IMR-90 (cell line): ENCODE measurements at regions of chr15 and their contacts with region 1.

Region 1: GRCh38 chr15:55661428-55661827 is 73.3 kb upstream of the PYGO1 start:
- DNase-seq: peak; percentile 33
- ATAC-seq: peak; percentile 44; the same call in 1 of the 2 replicates
- H3K4me3 ChIP-seq: no peak overlapping the region
- H3K27ac ChIP-seq: no peak overlapping the region
- H3K4me1 ChIP-seq: peaks cover 2% of the 10 kb centered on the region
- H3K27me3 ChIP-seq: no peaks in the 10 kb centered on the region
- CTCF ChIP-seq: no peak
- POLR2A ChIP-seq: no peak
- RAD21 ChIP-seq: no peak

Region 2: GRCh38 chr15:55168329-55168974 is 493.0 kb before region 1 on chr15:
- CTCF ChIA-PET with region 1: no interaction called
- POLR2A ChIA-PET with region 1: no interaction called
- dilution Hi-C with region 1: no loop called
- in situ Hi-C with region 1: no loop called
- intact Hi-C with region 1: no loop called
- DNase-seq: peak; percentile 67
- ATAC-seq: peak; percentile 97
- H3K4me3 ChIP-seq: no peak overlapping the region
- H3K27ac ChIP-seq: no peak overlapping the region
- H3K4me1 ChIP-seq: no peaks in the 10 kb centered on the region
- H3K27me3 ChIP-seq: no peaks in the 10 kb centered on the region
- CTCF ChIP-seq: peak; percentile 70
- POLR2A ChIP-seq: no peak
- RAD21 ChIP-seq: peak; percentile 49

Region 3: GRCh38 chr15:55721554-55722185 is 60.2 kb after region 1 on chr15:
- CTCF ChIA-PET with region 1: no interaction called
- POLR2A ChIA-PET with region 1: no interaction called
- dilution Hi-C with region 1: no loop called
- in situ Hi-C with region 1: no loop called
- intact Hi-C with region 1: loop called (anchors 5 kb)
- DNase-seq: no peak
- ATAC-seq: no peak
- H3K4me3 ChIP-seq: no peak overlapping the region
- H3K27ac ChIP-seq: no peak overlapping the region
- H3K4me1 ChIP-seq: no peaks in the 10 kb centered on the region
- H3K27me3 ChIP-seq: no peaks in the 10 kb centered on the region
- CTCF ChIP-seq: no peak
- POLR2A ChIP-seq: no peak
- RAD21 ChIP-seq: no peak